ENCODE measurements at regions of chr16 and their contacts with region 1.

Region 1: DNA sequence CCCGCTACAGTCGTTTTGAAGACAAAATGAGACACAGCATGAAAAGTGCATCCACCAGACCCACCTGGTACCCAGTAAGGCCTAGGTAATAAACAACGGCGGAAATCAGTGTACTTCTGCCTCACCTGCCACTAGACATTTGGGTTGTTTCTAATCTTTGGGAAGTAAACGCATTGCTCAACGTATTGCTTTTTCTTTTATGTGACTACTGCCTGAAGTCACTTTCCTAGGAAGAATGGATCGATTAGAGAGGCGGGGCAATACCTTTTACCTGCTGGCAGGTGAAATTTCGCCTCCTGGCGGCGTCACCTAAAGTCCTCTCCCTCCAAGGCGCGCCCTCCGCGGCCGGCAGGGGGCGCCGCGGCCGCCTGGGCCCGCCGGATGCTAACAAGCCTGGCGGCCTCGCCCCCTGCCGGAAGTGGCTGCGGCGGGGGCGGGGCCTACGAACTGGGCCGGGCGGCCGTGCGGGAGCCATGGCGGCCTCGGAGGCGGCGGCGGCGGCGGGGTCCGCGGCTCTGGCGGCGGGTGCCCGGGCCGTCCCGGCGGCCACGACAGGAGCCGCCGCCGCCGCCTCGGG is at the start of gene ATMIN:
- DNase-seq: peak; percentile 90
- ATAC-seq: peak; percentile 91
- H3K4me3 Mint-ChIP-seq: peak within 1 kb of the TSS; percentile 83
- H3K27ac Mint-ChIP-seq: peak within 1 kb of the TSS; percentile 35; the same call in 1 of the 2 replicates
- H3K4me1 Mint-ChIP-seq: peaks cover 11% of the 10 kb centered on the region
- H3K27me3 Mint-ChIP-seq: no peaks in the 10 kb centered on the region; the same call in 1 of the 2 replicates
- CTCF ChIP-seq: peak; percentile 93
- total RNA-seq, gene ATMIN: 36.0 to 43.1 TPM (median 37.2 TPM) in 3 replicates

Region 2: GRCh38 chr16:81006814-81007696 is 28.4 kb before region 1 on chr16 and contains the starts of genes CENPN and CMC2:
- CTCF ChIA-PET with region 1: interaction called, 23 read pairs
- POLR2A ChIA-PET with region 1: interaction called, 4 read pairs
- DNase-seq: peak; percentile 96
- ATAC-seq: peak; percentile 92
- H3K4me3 Mint-ChIP-seq: peak within 1 kb of the TSS; percentile 99
- H3K27ac Mint-ChIP-seq: peak within 1 kb of the TSS; percentile 100
- H3K4me1 Mint-ChIP-seq: peaks cover 22% of the 10 kb centered on the region
- H3K27me3 Mint-ChIP-seq: no peaks in the 10 kb centered on the region
- CTCF ChIP-seq: no peak
- total RNA-seq, gene CENPN: 47.4 to 49.7 TPM (median 48.5 TPM) in 3 replicates
- total RNA-seq, gene CMC2: 76.6 to 79.3 TPM (median 78.9 TPM) in 3 replicates

Region 3: DNA sequence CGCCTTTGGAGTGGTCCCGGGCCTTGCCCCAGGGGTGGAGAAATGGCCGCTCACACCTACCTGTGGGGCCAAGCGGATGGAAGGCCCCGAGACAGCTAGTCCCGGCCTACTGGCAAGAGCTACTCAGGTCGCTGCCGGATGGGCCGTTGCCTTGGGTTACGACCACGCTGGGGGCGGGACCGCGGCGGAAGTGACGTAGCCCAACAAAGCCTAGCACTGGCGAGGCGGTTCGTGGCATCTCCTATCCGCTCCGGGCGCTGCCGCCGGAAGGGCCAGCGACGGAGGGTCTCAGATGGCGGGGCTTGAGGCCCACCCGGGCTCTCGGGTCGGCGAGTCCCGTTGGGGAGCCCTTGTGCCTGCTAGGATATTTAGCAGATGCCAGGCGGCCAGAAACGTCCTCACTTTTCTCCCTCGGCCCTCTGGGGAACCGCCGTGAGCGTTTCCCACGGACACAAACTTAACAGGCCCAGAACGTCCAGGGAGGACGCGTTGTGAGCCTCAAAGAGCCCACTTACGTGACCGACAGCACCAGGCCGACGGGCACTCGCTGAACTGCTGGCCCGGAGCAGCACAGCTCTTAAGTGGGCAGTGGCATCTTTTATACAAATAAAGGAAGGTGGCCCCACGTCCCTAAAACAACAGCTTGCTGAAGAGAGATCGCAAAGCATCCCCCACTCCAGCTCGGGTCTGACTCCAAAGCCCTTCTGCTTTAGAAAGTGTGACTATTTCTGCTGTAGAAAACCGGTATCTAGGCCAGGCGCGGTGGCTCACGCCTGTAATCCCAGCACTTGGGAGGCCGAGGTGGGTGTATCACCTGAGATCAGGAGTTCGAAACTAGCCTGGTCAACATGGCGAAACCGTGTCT is 41.8 kb after region 1 on chr16 and contains the start of gene C16orf46:
- CTCF ChIA-PET with region 1: interaction called, 68 read pairs
- POLR2A ChIA-PET with region 1: interaction called, 5 read pairs
- DNase-seq: peak; percentile 99
- ATAC-seq: peak; percentile 89
- H3K4me3 Mint-ChIP-seq: no peak within 1 kb of the TSS
- H3K27ac Mint-ChIP-seq: peak within 1 kb of the TSS; percentile 92
- H3K4me1 Mint-ChIP-seq: peaks cover 20% of the 10 kb centered on the region
- H3K27me3 Mint-ChIP-seq: no peaks in the 10 kb centered on the region; the same call in 1 of the 2 replicates
- CTCF ChIP-seq: no peak
- total RNA-seq, gene C16orf46: 1.1 to 1.3 TPM (median 1.2 TPM) in 3 replicates